ENCODE measurements at regions of chr12 and their contacts with region 1.

Region 1: GRCh38 chr12:5003020-5003666 is 40.5 kb upstream of the KCNA5 start:
- DNase-seq: peak; percentile 49 to 82 (median 70)
- ATAC-seq: peak; percentile 86 to 99 (median 98)
- H3K4me3 ChIP-seq: no peak overlapping the region
- H3K27ac ChIP-seq: no peak overlapping the region
- H3K4me1 ChIP-seq: no peaks in the 10 kb centered on the region
- H3K27me3 ChIP-seq: no peaks in the 10 kb centered on the region
- CTCF ChIP-seq: peak; percentile 68 to 90 (median 86)

Region 2: DNA sequence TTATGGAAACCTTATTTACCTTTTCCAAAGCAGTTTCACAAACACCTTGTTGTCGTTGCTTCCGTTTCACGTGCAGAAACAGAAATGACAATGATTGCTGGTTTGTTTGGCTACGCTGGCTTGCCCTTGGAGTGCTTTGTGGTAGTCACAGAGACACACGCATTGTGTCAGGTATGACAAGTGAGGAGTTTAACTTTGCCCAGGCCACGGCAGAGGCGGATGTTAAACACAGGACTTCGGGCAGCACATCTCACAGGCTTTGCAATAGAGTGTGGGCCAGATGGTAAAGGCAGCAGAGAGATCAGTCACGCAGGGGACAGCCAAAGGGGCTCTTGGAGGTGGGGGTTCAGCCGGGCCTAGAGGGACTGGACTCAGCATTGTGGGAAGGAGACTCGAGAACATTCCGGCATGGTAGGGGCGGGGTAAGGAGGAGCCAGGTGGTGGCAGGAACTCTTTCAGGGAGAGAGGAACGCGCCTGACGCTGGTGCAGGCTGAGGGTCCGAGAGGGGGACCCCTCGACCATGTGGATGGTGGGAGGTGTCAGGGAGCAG is 153.3 kb before region 1 on chr12:
- intact Hi-C with region 1: loop called in 2 of 3 experiments (anchors 5 kb)
- DNase-seq: no peak
- ATAC-seq: no peak
- H3K4me3 ChIP-seq: no peak overlapping the region
- H3K27ac ChIP-seq: no peak overlapping the region
- H3K4me1 ChIP-seq: no peaks in the 10 kb centered on the region
- H3K27me3 ChIP-seq: peaks cover 0 to 7% (median 0%) of the 10 kb centered on the region in 4 donors
- CTCF ChIP-seq: no peak

Region 3: DNA sequence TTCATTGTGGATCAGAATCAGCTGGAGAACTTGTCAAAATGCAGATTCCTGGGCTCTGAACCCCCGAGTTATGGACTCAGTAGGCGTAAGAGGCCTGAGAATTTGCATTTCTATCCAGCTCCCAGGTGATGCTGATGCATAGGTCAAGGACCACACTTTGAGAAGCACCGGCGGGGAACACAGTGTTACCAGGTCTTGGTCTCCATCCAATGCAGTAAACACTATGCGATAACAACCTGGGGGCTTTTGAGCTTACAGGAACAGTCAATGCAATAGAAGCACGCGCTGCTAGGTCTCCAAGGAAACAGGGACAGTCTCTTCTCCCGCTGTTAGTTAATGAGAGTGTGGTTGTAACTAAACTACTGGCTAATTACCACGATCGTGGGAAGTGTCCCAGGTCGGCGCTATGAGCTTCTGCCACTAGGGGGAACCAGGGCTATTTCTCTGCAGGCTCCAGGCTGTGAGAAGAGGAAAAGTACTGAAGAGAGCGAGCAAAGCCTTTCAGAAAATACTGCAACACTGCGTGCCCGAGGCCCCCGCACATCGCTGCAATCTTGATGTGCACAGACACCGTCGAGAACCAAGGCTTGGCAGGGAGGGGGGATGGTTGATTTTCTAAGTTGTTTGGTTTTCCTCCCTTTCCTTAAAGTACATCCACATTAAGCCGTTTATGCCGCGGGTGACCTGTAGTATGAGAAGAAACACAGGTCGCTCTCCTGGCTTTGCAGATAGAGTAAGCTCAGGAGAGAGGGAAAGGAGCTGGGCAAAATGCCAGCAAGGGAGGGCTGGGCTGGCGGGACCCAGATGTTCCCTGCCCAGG is 145.5 kb before region 1 on chr12:
- intact Hi-C with region 1: loop called in 2 of 3 experiments (anchors 5 kb)
- DNase-seq: peak; percentile 51 to 85 (median 73)
- ATAC-seq: peak; percentile 89 to 92 (median 91)
- H3K4me3 ChIP-seq: peak overlapping the region in 2 of 4 donors; percentile 6 to 26
- H3K27ac ChIP-seq: no peak overlapping the region
- H3K4me1 ChIP-seq: peaks cover 0 to 4% (median 0%) of the 10 kb centered on the region in 3 donors
- H3K27me3 ChIP-seq: peaks cover 0 to 5% (median 2%) of the 10 kb centered on the region in 4 donors
- CTCF ChIP-seq: peak; percentile 75 to 86 (median 77)